Aorta (tissue), 5 donors: ENCODE measurements at regions of chr5 and their contacts with region 1.

Region 1: GRCh38 chr5:172293054-172293744 is 9.6 kb upstream of the UBTD2 start:
- DNase-seq: peak in 1 of 2 donors; percentile 72
- ATAC-seq: peak; percentile 85
- H3K4me3 ChIP-seq: no peak overlapping the region
- H3K27ac ChIP-seq: no peak overlapping the region
- H3K4me1 ChIP-seq: no peaks in the 10 kb centered on the region
- H3K27me3 ChIP-seq: peaks cover 0 to 2% of the 10 kb centered on the region in 2 donors

Region 2: DNA sequence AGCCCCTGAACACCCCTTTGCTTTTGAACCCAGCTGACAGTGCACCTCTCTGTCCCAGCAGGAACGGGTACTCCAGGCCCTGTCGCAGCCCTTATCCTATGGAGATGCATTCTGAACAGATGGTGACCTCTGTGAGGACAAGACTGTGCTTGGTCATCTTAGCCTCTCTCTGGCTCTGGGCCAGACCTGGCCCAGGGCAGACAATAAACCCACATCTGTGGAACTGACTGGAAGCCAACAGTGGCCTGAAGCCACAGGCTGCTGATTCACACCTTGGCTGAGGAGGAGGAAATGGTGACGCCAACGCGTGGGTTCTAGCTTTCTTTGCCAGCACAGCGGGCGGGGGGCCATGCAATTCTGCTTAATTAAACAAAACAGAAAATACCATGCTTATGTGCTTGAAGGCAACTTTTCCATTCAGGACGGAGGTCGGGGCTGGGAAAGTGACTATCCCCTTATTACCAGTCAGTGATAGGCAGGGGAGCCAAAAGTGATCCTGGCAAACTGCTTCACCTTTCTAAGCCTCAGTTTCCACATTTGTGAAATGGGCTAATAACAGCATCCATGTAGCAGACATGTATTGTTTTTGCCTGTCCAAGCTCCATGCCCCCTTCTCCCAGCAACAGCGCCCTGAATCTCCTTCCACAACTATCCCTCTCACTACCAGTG is 150.4 kb after region 1 on chr5:
- intact Hi-C with region 1: loop called in 1 of 2 experiments (anchors 10 kb)
- DNase-seq: peak; percentile 87 to 97
- ATAC-seq: peak; percentile 67
- H3K4me3 ChIP-seq: no peak overlapping the region
- H3K27ac ChIP-seq: no peak overlapping the region
- H3K4me1 ChIP-seq: no peaks in the 10 kb centered on the region
- H3K27me3 ChIP-seq: no peaks in the 10 kb centered on the region